ENCODE measurements at regions of chrX and their contacts with region 1.

Region 1: DNA sequence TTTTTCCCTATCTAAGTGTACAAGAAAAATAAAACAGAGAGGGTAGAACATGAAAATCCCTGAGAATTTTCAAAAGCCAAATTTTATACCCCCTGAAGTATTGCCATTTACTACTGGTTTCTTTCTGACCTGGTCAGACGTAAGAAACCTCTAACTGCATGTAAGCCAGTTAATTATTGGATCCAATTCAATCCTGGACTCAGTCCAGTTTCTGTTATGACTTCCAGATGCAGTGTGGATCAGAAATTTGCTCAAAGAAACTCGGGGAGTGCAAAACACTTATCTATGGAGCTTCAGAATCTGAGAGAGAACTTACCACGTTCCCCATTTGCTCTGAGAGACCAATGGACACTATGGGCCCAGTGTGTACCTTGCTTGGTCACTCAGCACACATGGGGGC is 383.5 kb downstream of the KLHL4 start:
- DNase-seq: no peak
- H3K4me3 ChIP-seq: no peak overlapping the region
- H3K27ac ChIP-seq: no peak overlapping the region
- H3K4me1 ChIP-seq: no peaks in the 10 kb centered on the region
- H3K27me3 ChIP-seq: no peaks in the 10 kb centered on the region
- CTCF ChIP-seq: no peak

Region 2: GRCh38 chrX:87924619-87925018 is 23.6 kb after region 1 on chrX:
- CTCF ChIA-PET with region 1: no interaction called
- POLR2A ChIA-PET with region 1: no interaction called
- intact Hi-C with region 1: loop called (anchors 1 kb)
- DNase-seq: no peak
- H3K4me3 ChIP-seq: no peak overlapping the region
- H3K27ac ChIP-seq: no peak overlapping the region
- H3K4me1 ChIP-seq: no peaks in the 10 kb centered on the region
- H3K27me3 ChIP-seq: no peaks in the 10 kb centered on the region
- CTCF ChIP-seq: no peak

Region 3: GRCh38 chrX:87941841-87942240 is 40.8 kb after region 1 on chrX:
- CTCF ChIA-PET with region 1: no interaction called
- POLR2A ChIA-PET with region 1: no interaction called
- intact Hi-C with region 1: no loop called
- DNase-seq: no peak
- H3K4me3 ChIP-seq: no peak overlapping the region
- H3K27ac ChIP-seq: no peak overlapping the region
- H3K4me1 ChIP-seq: no peaks in the 10 kb centered on the region
- H3K27me3 ChIP-seq: no peaks in the 10 kb centered on the region
- CTCF ChIP-seq: no peak